Right ventricle myocardium inferior (tissue), 1 donor: ENCODE measurements at regions of chr15 and their contacts with region 1.

Region 1: DNA sequence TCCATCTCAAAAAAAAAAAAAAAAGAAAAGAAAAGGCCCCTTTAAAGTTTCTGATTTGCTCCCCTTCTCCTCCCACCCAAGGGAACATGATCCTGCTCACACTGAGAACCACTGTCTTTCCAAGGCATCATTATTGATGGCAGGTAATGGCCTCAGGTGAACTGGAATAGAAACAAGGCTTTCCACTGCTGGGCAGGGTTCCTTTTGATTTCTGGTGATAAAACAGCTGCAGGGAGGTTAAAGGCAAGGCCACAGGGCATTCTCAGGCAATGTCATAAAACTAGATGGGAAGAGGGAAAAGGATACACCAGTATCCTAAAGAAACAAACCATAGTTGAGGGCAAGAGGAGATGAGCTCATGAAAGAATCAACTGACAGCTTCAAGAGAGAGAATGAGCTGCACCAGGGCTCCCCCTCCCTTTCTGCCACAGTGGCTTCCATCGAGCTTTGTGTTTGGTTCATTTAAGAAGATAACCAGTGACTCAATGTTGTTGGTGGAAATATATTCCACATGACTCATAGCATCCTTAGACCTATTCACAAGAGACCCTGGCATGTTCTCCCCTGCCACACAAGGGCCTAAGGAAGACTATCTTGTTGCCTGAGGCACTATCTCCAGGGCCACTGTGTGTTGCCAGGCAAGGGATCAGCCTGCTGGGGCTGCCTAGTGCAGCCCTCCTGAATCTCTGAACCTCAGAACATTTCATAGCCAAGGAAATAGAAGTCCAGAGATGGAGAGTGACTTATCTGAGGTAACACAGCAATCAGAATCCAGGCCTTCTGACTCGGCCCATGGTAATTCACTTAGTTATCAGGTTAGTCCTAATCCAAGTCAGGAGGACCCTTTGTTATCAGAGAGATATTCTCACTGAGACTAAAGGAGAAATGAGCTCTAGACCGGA is 86.5 kb downstream of the WDR76 start:
- DNase-seq: no peak
- ATAC-seq: peak; percentile 56

Region 2: DNA sequence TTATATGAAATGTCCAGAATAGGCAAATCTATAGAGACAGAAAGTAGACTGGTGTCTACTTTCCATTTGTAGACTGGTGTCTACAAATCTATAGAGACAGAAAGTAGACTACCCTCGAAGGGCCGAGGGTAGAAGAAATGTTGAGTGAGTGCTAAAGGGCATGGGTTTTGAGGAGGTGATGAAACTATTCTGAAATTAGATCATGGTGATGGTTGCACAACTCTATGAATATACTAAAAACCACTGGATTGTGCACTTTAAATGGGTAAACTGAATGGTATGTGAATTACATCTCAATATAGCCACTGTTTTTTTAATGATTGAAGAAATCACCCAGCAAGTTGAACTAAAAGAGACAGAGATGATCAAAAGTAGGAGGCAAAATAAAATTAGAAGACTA is 448.2 kb before region 1 on chr15:
- intact Hi-C with region 1: no loop called
- DNase-seq: no peak
- ATAC-seq: no peak

Region 3: DNA sequence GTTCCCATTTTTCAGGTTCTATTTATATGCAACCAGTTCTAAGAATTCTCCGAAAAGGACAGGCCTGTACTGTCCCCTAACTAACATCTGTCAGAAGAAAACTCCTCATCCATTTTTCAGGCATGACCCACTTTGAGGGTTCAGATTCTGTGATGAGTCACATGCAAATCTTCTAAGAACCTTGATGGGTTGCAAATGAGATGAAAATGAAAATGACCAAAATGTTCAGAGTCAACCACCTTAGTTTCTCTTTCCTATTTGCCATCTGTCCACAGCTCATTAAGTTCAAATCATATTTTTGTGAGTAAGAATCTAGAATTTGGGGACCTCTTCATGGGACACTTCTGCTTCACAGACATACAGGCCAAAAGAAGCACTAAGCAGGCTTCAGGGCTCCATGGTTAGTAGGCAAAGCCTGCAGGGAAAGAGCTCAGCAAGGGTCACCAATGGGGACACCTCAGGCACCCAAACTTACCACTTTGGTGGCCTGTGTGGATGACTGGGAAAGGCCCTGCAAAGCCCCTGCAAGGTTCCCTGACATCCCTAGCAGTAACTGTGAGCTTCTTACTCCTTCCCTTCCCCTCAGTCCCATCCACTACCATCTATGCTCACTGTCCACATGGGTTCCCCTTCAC is 35.5 kb after region 1 on chr15:
- intact Hi-C with region 1: no loop called
- DNase-seq: no peak
- ATAC-seq: no peak

Region 4: DNA sequence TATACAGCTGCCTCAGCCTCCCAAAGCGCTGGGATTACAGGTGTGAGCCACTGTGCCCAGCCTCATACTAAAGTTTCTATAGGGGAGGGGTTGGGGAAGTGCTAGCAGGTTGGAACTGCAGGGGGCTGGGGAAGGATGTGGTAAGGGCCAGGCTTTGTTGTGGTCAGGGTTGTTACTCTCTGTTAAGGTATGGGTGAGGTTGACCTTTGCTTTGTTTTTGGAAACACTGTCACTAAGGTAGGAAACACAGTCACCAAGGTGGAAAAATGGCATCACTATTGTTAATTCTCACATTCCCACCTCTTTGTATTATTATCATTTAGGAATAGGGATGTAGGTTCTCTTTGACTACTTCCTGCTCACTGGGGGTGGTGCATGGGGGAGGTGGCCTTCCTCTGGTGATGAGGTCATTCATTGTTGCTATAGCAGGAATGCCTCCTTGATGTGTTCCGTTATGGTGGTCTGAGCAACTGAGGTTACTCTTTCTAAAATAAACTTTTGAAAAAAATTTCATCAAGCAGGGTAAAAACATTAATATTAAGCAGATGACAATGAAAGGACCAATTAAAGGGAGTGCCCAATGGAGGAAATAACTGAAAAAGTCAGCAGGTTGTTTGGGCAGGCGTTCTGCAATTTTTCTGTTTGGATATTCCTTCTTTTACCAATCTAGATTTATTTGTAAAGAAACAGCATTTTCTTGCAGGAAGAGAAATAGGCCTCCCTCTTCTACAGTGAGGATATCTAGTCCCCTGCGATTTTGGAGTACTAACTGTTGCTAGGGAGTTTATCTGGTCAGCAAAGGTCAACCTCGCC is 64.0 kb after region 1 on chr15:
- intact Hi-C with region 1: loop called (anchors 10 kb)
- DNase-seq: no peak
- ATAC-seq: no peak